H1 (cell line): ENCODE measurements at regions of chr7 and their contacts with region 1.

Region 1: GRCh38 chr7:143975617-143976016 is 21.0 kb downstream of the OR2F1 start:
- DNase-seq: no peak
- H3K4me3 ChIP-seq: no peak overlapping the region
- H3K27ac ChIP-seq: no peak overlapping the region
- H3K4me1 ChIP-seq: no peaks in the 10 kb centered on the region
- H3K27me3 ChIP-seq: no peaks in the 10 kb centered on the region
- CTCF ChIP-seq: peak in 2 of 3 experiments; percentile 63 to 69; a peak in 3 of 4 replicates
- EP300 ChIP-seq: no peak
- POLR2A ChIP-seq: no peak
- RAD21 ChIP-seq: peak; percentile 8 to 28; a peak in 3 of 4 replicates

Region 2: DNA sequence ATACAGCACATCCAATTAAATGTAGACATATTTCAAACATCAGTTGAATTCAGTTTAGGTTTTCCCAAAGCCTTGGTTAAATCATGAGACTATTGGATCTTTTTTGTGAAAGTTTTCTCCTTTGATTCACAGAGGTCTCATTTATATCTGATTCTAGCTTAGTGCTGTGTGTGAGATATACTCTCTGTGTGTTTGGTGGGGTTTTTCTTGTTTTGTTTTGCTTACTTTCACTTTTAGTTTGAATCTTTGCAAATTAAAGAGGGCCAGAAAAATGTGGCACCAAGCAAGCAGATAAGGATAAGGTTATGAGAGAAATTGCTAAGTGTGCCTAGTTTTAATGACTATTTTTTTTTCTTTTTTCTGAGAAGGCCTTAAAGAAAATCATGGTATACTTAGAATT is 11.9 kb after region 1 on chr7:
- CTCF ChIA-PET with region 1: interaction called, 20 read pairs
- POLR2A ChIA-PET with region 1: no interaction called
- DNase-seq: no peak
- H3K4me3 ChIP-seq: no peak overlapping the region
- H3K27ac ChIP-seq: no peak overlapping the region
- H3K4me1 ChIP-seq: no peaks in the 10 kb centered on the region
- H3K27me3 ChIP-seq: no peaks in the 10 kb centered on the region
- CTCF ChIP-seq: no peak
- EP300 ChIP-seq: no peak
- POLR2A ChIP-seq: no peak
- RAD21 ChIP-seq: no peak

Region 3: GRCh38 chr7:144086730-144087129 is 111.1 kb after region 1 on chr7:
- CTCF ChIA-PET with region 1: no interaction called
- POLR2A ChIA-PET with region 1: no interaction called
- DNase-seq: no peak
- H3K4me3 ChIP-seq: no peak overlapping the region
- H3K27ac ChIP-seq: no peak overlapping the region
- H3K4me1 ChIP-seq: no peaks in the 10 kb centered on the region
- H3K27me3 ChIP-seq: no peaks in the 10 kb centered on the region
- CTCF ChIP-seq: no peak
- EP300 ChIP-seq: no peak
- POLR2A ChIP-seq: no peak
- RAD21 ChIP-seq: no peak

Region 4: GRCh38 chr7:144437370-144438191 is 462.0 kb after region 1 on chr7:
- CTCF ChIA-PET with region 1: no interaction called
- POLR2A ChIA-PET with region 1: no interaction called
- DNase-seq: peak; percentile 54 to 75
- H3K4me3 ChIP-seq: no peak overlapping the region
- H3K27ac ChIP-seq: no peak overlapping the region
- H3K4me1 ChIP-seq: no peaks in the 10 kb centered on the region
- H3K27me3 ChIP-seq: no peaks in the 10 kb centered on the region
- CTCF ChIP-seq: peak in 2 of 3 experiments; percentile 48 to 77; a peak in 2 of 4 replicates
- EP300 ChIP-seq: no peak
- POLR2A ChIP-seq: no peak
- RAD21 ChIP-seq: peak; percentile 81 to 84